WTC11 (cell line): ENCODE measurements at regions of chr3 and their contacts with region 1.

Region 1: DNA sequence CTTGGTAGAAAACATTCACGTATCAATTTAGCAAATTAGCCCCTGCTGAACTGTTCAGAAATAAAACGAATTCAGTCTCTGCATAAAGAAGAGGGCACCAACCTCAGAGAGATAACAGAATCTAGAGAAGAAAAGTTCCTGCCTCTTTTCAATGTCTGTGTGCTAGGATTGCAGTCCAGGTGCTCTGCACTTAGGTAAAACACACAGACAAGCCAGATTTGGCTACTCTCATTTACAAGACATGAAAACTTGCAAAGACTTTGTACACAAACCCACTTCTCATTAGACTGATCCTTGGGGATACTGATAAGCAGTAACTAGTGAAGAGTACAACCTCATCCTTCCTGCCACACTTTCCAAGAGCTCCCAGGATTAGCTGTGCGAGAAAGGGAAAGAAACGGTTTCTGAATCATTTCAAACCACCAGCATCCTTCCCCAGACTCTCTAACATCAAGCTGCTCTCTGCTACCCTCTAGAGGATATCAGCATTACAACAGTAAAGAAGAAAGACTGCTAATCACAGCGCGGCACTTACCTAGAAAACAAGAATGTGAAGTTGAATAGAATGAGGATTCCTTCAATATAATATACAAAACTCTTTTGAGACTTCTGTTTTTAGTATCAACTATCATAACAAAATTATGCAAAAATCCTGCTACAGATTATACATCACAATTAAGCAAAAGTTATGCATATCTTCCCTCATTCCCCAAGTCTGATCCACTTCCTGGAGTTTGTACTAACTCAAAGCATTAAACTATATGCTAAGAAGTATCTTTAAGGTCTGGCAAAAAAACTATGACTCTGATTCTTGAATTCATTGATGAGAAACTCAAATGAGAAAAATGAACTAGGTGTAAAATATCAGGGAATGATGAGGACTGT is 306.4 kb downstream of the MAGI1 start:
- DNase-seq: no peak
- ATAC-seq: peak; percentile 86
- H3K4me3 Mint-ChIP-seq: no peak overlapping the region
- H3K27ac Mint-ChIP-seq: peak overlapping the region; percentile 51; the same call in 1 of the 2 replicates
- H3K4me1 Mint-ChIP-seq: peaks cover 54% of the 10 kb centered on the region
- H3K27me3 Mint-ChIP-seq: no peaks in the 10 kb centered on the region
- CTCF ChIP-seq: peak; percentile 40; the same call in 1 of the 2 replicates

Region 2: GRCh38 chr3:65439641-65440284 is 292.5 kb before region 1 on chr3:
- CTCF ChIA-PET with region 1: interaction called, 14 read pairs
- POLR2A ChIA-PET with region 1: no interaction called
- DNase-seq: peak; percentile 62
- ATAC-seq: peak; percentile 97
- H3K4me3 Mint-ChIP-seq: no peak overlapping the region
- H3K27ac Mint-ChIP-seq: peak overlapping the region; percentile 68
- H3K4me1 Mint-ChIP-seq: peaks cover 20% of the 10 kb centered on the region
- H3K27me3 Mint-ChIP-seq: no peaks in the 10 kb centered on the region
- CTCF ChIP-seq: peak; percentile 27; the same call in 1 of the 2 replicates

Region 3: DNA sequence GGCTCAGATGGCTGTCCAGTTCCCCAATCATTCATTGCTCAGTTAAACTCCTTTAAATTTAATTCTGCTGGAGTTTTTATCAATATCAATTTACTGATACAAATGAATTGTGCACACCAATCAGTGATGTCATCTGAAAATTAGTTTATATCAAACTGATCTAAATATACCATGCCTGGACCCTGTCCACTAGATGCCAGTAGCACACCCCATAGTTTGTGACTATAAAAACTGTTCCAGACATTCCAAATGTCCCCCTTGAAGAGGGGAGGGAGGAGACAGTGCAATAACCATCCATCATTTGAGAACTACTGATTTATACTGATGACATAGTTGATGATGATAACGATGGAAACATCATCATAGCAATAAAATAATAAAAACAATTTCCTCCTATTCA is 74.3 kb after region 1 on chr3:
- CTCF ChIA-PET with region 1: no interaction called
- POLR2A ChIA-PET with region 1: no interaction called
- DNase-seq: no peak
- ATAC-seq: no peak
- H3K4me3 Mint-ChIP-seq: no peak overlapping the region
- H3K27ac Mint-ChIP-seq: no peak overlapping the region
- H3K4me1 Mint-ChIP-seq: peaks cover 11% of the 10 kb centered on the region
- H3K27me3 Mint-ChIP-seq: no peaks in the 10 kb centered on the region
- CTCF ChIP-seq: no peak

Region 4: DNA sequence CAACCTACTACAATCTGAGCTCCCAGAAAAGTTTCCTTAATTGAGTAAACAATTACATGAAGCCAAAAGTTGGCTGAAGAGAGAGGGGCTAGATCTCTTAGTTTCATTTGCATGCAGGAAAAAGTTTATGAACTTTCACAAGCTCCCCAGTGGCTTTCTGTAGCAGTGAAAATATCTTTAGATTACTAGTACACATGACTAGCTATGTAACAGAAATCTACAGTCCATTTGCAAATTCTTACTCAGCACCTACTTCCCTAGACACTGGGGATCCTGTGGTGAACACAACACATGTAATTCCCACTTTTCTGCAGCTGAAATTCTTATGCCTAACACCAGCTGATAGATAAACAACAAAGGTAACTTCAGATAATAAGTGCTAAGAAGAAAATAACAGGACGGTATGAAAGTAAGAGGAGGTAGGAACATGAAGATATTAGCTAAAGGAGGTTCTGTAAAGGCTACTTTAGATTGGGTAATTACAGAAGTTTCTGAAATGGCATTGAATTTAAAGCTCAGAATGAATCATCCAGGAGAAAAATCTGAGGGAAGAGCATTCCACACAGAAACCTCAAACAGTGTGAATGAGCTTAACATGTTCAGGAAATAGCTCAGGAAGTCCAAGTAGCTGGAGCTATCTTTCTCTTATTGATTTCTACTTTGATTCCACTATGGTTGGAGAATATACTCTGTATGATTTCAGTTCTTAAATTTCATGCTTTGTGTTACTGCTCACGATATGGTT is 101.6 kb after region 1 on chr3:
- CTCF ChIA-PET with region 1: no interaction called
- POLR2A ChIA-PET with region 1: no interaction called
- DNase-seq: no peak
- ATAC-seq: no peak
- H3K4me3 Mint-ChIP-seq: no peak overlapping the region
- H3K27ac Mint-ChIP-seq: no peak overlapping the region
- H3K4me1 Mint-ChIP-seq: peaks cover 53% of the 10 kb centered on the region
- H3K27me3 Mint-ChIP-seq: no peaks in the 10 kb centered on the region
- CTCF ChIP-seq: no peak